Posterior cingulate gyrus (tissue), 11 donors: ENCODE measurements at regions of chr5 and their contacts with region 1.

Region 1: GRCh38 chr5:160119142-160119904 is at the start of gene PWWP2A:
- DNase-seq: peak; percentile 96 to 100 (median 99)

Region 2: DNA sequence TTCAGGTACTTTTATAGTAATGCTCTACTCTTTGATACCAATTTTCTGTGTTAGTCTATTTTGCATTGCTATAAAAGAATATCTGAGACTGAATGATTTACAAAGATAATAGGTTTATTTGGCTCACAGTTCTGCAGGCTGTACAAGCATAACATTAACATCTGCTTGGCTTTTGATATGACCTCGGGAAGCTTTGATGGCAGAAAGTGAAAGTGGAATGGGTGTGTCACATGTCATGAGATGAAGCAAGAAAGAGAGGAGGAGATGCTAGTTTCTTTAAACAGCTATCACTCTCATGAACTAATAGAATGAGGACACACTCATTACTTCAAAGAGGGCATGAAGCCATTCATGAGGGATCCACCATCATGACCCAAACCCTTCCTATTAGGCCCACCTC is 518.1 kb before region 1 on chr5:
- intact Hi-C with region 1: no loop called
- DNase-seq: no peak

Region 3: DNA sequence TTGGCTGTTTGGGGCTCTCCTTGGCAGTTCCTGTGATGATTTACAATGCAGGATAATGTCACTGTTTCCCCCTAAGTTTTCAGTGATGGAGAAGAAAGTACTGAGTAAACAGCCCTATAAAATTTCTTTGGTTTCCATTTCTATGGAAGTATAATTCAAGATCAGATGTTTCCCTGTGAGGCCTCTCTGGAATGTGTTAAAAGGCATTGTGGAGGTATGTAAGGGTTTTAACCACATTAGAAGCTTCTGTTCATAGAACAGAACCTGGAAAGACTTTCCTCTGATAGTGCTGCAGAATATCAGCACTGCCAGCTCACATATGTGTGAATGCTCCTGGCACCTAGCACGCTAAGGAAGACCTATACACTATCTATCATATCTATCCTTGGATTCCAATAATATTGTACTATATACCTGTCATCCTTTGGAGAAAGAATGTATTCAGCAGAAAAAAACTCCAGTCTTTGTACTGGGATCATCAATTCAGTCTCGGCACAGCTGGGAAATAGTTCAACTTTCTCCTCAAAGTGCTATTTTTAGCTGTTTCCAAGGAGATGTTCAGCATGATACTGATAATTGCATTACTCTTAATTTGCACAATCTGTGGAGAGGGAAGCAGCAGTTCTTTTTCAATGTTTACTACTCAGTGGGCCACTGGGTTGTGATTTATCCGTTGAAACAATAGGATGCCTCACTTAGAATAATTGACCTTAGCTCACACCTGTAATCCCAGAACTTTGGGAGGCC is 88.5 kb before region 1 on chr5:
- intact Hi-C with region 1: no loop called
- DNase-seq: no peak

Region 4: GRCh38 chr5:160165137-160166068 is 46.1 kb after region 1 on chr5:
- intact Hi-C with region 1: loop called (anchors 2 kb)
- DNase-seq: peak; percentile 75 to 97 (median 88)

Region 5: GRCh38 chr5:160175438-160176218 is 56.3 kb after region 1 on chr5:
- intact Hi-C with region 1: loop called (anchors 2 kb)
- DNase-seq: peak; percentile 67 to 98 (median 84)